ENCODE measurements at regions of chr1 and their contacts with region 1.

Region 1: DNA sequence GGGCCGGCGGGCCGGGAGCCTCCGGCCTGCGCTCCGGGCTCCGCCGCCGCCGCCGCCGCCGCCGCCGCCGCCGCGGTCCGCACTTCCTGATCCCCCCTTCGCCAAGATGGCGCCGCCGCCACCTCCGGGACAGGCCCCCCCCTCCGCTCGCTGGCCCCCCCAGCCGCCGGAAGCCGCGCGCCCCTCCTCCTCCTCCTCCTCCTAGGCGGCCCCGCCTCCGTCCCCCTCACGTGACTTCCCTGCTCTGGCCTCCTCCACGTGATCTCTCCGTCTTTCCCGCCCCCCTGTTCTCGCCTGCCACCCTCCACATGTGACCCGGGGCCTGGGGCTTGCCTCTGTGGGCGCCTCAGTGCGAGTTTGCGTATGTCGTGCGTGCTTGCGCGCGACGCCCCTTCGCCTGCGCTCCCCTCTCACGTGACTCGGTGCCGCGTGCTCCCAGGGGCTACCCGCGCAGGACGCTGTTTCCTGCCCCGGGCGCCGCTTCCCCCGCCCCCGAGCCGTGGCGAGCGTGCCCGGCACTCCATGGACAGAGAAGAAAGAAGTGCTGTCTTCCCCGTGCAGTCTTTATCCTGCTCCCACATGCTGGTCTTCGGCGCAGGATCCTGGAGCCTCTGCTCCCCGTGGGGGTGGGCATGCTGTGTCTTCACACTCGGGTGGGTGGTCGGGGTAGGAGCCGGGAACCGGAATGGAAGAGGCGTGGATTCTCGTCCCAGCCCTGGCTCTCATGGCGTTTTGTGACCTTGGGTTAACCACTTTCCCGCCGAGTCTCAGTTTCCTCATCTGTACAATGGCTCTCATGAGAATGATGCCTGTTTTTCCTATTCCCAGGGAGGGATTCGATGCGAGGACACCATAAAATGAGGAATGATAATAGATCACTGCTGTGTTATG is at the start of gene UBE2Q1:
- DNase-seq: peak; percentile 99
- ATAC-seq: peak; percentile 86
- H3K4me3 ChIP-seq: peak within 1 kb of the TSS; percentile 95
- H3K27ac ChIP-seq: peak within 1 kb of the TSS; percentile 94
- H3K4me1 ChIP-seq: peaks cover 3% of the 10 kb centered on the region
- H3K27me3 ChIP-seq: no peaks in the 10 kb centered on the region
- CTCF ChIP-seq: no peak
- POLR2A ChIP-seq: no peak
- RAD21 ChIP-seq: no peak
- total RNA-seq, gene UBE2Q1: 24.7 and 25.3 TPM in 2 replicates

Region 2: GRCh38 chr1:154574716-154575115 is 15.9 kb after region 1 on chr1:
- CTCF ChIA-PET with region 1: interaction called, 10 read pairs
- POLR2A ChIA-PET with region 1: no interaction called
- dilution Hi-C with region 1: no loop called
- in situ Hi-C with region 1: no loop called
- intact Hi-C with region 1: no loop called
- DNase-seq: peak; percentile 49
- ATAC-seq: peak; percentile 69
- H3K4me3 ChIP-seq: no peak overlapping the region
- H3K27ac ChIP-seq: no peak overlapping the region
- H3K4me1 ChIP-seq: peaks cover 4% of the 10 kb centered on the region; the same call in 1 of the 2 replicates
- H3K27me3 ChIP-seq: peaks cover 20% of the 10 kb centered on the region
- CTCF ChIP-seq: no peak
- POLR2A ChIP-seq: no peak
- RAD21 ChIP-seq: no peak

Region 3: DNA sequence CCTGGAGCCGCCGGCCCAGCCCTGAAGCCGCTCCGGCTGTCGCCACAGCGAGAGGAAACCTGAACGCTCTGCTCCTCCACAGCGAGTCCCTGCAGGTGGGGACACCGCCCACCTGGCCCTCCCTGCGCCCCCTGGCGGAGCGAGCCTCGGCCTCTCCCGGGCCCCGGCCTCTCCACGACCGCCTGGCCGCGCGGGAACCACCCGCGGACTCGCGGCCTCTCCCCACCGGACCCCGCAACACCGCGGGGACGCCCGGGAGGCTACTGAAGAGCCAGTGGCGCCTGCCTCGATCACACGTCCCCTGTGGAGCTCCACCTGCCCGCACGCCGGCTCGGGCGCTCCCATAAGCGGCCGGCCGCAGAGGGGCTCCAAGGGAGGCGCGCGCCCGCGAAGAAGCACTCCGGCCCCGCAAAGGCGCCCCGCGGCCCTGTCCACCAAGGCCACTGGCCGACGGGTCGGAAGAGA is 201.7 kb after region 1 on chr1:
- CTCF ChIA-PET with region 1: no interaction called
- POLR2A ChIA-PET with region 1: no interaction called
- dilution Hi-C with region 1: no loop called
- in situ Hi-C with region 1: no loop called
- intact Hi-C with region 1: loop called (anchors 5 kb)
- DNase-seq: no peak
- ATAC-seq: peak; percentile 59; the same call in 1 of the 2 replicates
- H3K4me3 ChIP-seq: no peak overlapping the region
- H3K27ac ChIP-seq: no peak overlapping the region
- H3K4me1 ChIP-seq: no peaks in the 10 kb centered on the region
- H3K27me3 ChIP-seq: peaks cover 48% of the 10 kb centered on the region
- CTCF ChIP-seq: peak; percentile 46
- POLR2A ChIP-seq: no peak
- RAD21 ChIP-seq: peak; percentile 45

Region 4: DNA sequence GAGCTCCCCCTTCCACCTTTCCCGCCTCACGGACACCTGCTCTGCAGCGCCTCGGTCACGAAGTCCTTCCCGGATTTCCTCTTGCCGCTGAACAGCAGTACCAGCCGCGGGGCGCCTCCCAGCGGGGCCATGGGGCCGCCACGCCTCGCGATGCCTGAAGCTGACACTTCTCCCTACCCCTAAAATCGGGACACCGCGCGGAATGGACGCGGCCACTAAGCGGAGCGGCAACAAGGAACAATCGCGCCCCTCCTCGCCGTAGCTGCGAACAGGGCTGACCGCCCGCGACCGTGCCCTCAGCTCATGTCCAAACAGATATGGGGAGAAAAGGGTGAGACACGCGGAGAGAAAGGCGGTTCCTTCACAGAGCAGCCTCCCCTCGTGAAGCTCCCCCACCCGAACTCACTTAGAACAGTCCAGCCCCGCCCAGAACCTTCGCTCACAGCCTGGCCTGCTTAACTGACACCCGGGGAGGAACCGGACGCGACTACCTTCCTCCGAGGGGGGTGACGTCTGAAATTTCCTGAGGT is 377.8 kb after region 1 on chr1 and contains the start of gene PMVK:
- CTCF ChIA-PET with region 1: no interaction called
- POLR2A ChIA-PET with region 1: no interaction called
- dilution Hi-C with region 1: no loop called
- in situ Hi-C with region 1: no loop called
- intact Hi-C with region 1: loop called (anchors 1 kb)
- DNase-seq: peak; percentile 95
- ATAC-seq: peak; percentile 97
- H3K4me3 ChIP-seq: peak within 1 kb of the TSS; percentile 63
- H3K27ac ChIP-seq: peak within 1 kb of the TSS; percentile 94
- H3K4me1 ChIP-seq: peaks cover 2% of the 10 kb centered on the region
- H3K27me3 ChIP-seq: no peaks in the 10 kb centered on the region
- CTCF ChIP-seq: peak; percentile 40
- POLR2A ChIP-seq: peak; percentile 64
- RAD21 ChIP-seq: peak; percentile 24; the same call in 1 of the 2 replicates
- total RNA-seq, gene PMVK: 7.2 and 9.0 TPM in 2 replicates

Region 5: DNA sequence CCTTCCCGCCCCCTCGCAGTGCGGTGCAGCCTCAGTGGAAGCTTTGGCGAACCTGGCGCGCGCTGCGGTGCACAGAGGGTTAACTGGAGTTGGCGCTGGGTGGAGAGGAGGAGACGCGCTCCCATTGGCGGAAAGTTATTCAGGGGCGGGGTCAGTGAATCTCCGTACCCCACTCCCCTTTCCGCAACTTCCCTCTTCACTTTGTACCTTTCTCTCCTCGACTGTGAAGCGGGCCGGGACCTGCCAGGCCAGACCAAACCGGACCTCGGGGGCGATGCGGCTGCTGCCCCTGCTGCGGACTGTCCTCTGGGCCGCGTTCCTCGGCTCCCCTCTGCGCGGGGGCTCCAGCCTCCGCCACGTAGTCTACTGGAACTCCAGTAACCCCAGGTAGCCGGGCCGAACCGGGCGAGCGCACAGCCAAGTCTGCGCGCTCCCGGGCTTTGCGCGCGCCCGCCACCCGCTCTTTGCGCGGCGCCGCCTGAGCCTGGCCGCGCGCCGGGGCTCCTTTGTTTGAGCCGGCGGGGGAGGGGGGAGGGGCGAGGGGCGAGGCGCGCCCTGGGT is 504.8 kb after region 1 on chr1 and contains the start of gene EFNA4:
- CTCF ChIA-PET with region 1: no interaction called
- POLR2A ChIA-PET with region 1: no interaction called
- dilution Hi-C with region 1: no loop called
- in situ Hi-C with region 1: no loop called
- intact Hi-C with region 1: loop called (anchors 2 kb)
- DNase-seq: peak; percentile 80
- ATAC-seq: peak; percentile 91
- H3K4me3 ChIP-seq: peak within 1 kb of the TSS; percentile 90
- H3K27ac ChIP-seq: peak within 1 kb of the TSS; percentile 44
- H3K4me1 ChIP-seq: peaks cover 4% of the 10 kb centered on the region; the same call in 1 of the 2 replicates
- H3K27me3 ChIP-seq: no peaks in the 10 kb centered on the region
- CTCF ChIP-seq: no peak
- POLR2A ChIP-seq: peak; percentile 53; the same call in 1 of the 2 replicates
- RAD21 ChIP-seq: no peak
- total RNA-seq, gene EFNA4: 3.3 and 3.8 TPM in 2 replicates

Measured in IMR-90 (cell line).